Activated naive CD4-positive, alpha-beta T cell treated with anti-CD3 and anti-CD28 coated beads for 36 hours (primary cell): ENCODE measurements at regions of chr7 and their contacts with region 1.

Region 1: DNA sequence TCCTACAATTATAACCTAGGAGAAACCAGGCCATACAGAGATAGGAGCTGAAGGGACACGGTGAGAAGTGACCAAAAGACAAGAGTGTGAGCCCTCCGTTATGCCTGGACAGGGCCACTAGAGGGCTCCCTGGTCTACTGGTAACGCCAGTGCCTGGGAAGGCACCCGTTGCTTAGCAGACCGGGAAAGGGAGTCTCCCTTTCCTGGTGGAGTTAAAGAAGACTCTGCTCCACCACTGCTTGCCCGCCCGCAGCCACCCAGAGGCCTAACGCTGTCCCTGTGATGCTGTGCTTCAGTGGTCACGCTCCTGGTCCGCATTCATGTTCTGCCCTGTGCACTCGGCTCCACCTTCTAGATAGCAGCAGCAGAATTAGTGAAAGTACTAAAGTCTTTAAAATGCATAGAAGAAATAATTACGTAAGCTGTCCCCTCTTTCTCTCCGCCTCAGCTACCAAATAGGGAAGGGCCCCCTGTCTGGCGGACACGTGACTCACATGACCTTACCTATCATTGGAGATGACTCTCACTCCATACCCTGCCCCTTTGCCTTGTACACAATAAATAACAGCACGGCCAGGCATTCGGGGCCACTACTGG is 34.8 kb downstream of the GRID2IP start:
- DNase-seq: peak; percentile 84
- H3K4me3 Mint-ChIP-seq: peak overlapping the region; percentile 76
- H3K27ac Mint-ChIP-seq: no peak overlapping the region
- H3K4me1 Mint-ChIP-seq: peaks cover 5% of the 10 kb centered on the region
- H3K27me3 Mint-ChIP-seq: no peaks in the 10 kb centered on the region

Region 2: GRCh38 chr7:5854738-5855137 is 661.7 kb before region 1 on chr7:
- CTCF ChIA-PET with region 1: interaction called, 8 read pairs
- intact Hi-C with region 1: loop called (anchors 1 kb)
- DNase-seq: no peak
- H3K4me3 Mint-ChIP-seq: no peak overlapping the region
- H3K27ac Mint-ChIP-seq: no peak overlapping the region
- H3K4me1 Mint-ChIP-seq: peaks cover 14% of the 10 kb centered on the region
- H3K27me3 Mint-ChIP-seq: no peaks in the 10 kb centered on the region

Region 3: DNA sequence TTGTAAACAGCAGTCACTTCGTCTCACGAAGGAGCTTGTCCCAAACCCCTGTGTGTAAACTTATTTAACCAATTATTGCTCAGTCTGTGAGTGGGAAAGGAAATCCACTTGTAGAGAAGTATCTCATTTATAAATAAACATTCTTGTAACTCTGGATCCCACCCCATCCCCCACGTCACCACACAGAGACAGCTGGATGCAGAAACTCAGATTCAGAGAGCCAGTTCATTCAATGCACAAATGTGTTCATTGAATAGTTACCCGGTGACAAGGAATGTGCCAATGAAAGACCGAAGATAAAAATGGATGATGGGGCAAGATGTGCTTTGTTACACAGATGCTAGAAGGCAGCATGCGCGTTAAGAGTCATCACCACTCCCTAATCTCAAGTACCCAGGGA is 644.2 kb before region 1 on chr7:
- CTCF ChIA-PET with region 1: no interaction called
- intact Hi-C with region 1: no loop called
- DNase-seq: no peak
- H3K4me3 Mint-ChIP-seq: no peak overlapping the region
- H3K27ac Mint-ChIP-seq: no peak overlapping the region
- H3K4me1 Mint-ChIP-seq: no peaks in the 10 kb centered on the region
- H3K27me3 Mint-ChIP-seq: no peaks in the 10 kb centered on the region

Region 4: GRCh38 chr7:6558837-6559236 is 42.4 kb after region 1 on chr7:
- CTCF ChIA-PET with region 1: interaction called, 32 read pairs
- intact Hi-C with region 1: loop called (anchors 1 kb)
- DNase-seq: peak; percentile 55
- H3K4me3 Mint-ChIP-seq: no peak overlapping the region
- H3K27ac Mint-ChIP-seq: no peak overlapping the region
- H3K4me1 Mint-ChIP-seq: peaks cover 7% of the 10 kb centered on the region
- H3K27me3 Mint-ChIP-seq: no peaks in the 10 kb centered on the region

Region 5: GRCh38 chr7:6571160-6571779 is 54.8 kb after region 1 on chr7:
- CTCF ChIA-PET with region 1: interaction called, 36 read pairs
- intact Hi-C with region 1: loop called (anchors 1 kb)
- DNase-seq: no peak
- H3K4me3 Mint-ChIP-seq: no peak overlapping the region
- H3K27ac Mint-ChIP-seq: no peak overlapping the region
- H3K4me1 Mint-ChIP-seq: peaks cover 4% of the 10 kb centered on the region
- H3K27me3 Mint-ChIP-seq: no peaks in the 10 kb centered on the region

Region 6: DNA sequence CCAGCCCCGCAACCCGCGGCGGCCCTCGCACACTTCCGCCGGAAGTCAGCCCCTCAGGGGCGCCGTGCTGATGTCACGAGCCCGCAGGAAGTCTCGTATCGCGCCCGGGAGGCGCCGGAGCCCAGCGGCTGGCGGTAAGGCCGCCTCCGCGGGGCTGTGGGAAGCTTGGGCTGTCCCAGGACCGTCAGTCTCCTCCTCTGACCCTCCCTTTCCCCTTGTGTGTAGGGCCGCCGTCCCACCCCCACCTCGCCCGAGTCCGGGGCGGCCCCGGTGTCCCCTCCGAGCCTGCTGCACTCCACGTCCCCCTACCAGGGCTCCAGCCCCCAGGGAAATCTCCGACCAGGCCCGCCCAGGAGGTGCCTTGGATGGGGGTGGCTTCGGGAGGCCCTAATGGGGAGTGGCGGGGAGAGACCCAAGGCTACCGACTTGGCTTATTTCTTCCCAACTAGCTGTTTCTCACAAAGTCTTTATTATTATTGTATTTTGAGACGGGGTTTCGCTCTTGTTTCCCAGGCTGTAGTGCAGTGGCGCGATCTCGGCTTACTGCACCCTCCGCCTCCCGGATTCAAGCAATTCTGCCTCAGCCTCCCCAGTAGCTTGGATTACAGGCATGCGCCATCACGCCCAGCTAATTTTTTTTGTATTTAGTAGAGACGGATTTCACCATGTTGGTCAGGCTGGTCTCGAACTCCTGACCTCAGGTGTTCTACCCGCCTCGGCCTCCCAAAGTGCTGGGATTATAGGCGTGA is 61.1 kb after region 1 on chr7 and contains the start of gene ZDHHC4:
- CTCF ChIA-PET with region 1: interaction called, 36 read pairs
- intact Hi-C with region 1: loop called (anchors 1 kb)
- DNase-seq: peak; percentile 91
- H3K4me3 Mint-ChIP-seq: peak within 1 kb of the TSS; percentile 84
- H3K27ac Mint-ChIP-seq: peak within 1 kb of the TSS; percentile 92
- H3K4me1 Mint-ChIP-seq: peaks cover 20% of the 10 kb centered on the region
- H3K27me3 Mint-ChIP-seq: no peaks in the 10 kb centered on the region
- total RNA-seq, gene ZDHHC4: 48.1 to 49.4 TPM